ENCODE measurements at regions of chr2 and their contacts with region 1.

Region 1: DNA sequence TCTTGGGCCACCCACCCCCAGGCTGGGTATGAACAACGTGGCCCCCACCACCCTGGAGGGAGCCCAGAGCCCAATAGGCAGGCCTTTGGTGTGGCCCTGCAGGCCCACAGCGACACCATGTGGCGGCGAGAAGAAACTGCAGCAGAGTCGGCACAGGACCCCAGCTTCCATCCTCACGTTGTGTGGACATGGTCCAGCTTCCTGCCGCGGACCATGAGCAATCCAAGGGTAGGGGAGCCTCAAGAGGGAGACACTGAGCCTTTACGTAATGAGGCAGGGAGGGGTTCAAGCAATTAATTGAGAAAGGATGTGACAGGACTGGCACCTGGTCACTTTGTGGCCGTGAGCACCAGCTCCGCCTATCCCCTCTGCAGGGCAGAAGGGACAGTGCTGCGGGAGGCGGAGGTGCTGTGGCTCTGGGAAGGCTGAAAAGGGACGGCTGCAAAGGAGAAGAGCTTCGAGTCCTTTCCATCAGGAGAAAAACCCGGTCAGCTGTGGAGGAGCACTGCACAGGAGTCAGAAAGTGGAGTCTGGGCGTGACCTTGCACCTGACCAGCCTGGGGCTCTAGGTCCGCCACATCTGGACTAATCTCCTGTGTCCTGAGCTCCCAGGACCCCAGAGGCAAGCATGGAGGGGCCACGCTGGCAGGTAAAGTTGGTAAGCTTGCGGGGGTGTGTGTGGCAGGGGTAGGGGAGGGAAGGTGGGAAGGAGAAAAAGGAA is 44.8 kb downstream of the TMEM37 start:
- DNase-seq: peak; percentile 29 to 89
- H3K4me3 ChIP-seq: no peak overlapping the region
- CTCF ChIP-seq: peak in 1 of 3 donors; percentile 79
- POLR2A ChIP-seq: no peak

Region 2: GRCh38 chr2:119011162-119011909 is 465.1 kb before region 1 on chr2:
- intact Hi-C with region 1: loop called (anchors 10 kb)
- DNase-seq: peak in 1 of 2 donors; percentile 74
- H3K4me3 ChIP-seq: no peak overlapping the region
- CTCF ChIP-seq: no peak
- POLR2A ChIP-seq: no peak

Region 3: DNA sequence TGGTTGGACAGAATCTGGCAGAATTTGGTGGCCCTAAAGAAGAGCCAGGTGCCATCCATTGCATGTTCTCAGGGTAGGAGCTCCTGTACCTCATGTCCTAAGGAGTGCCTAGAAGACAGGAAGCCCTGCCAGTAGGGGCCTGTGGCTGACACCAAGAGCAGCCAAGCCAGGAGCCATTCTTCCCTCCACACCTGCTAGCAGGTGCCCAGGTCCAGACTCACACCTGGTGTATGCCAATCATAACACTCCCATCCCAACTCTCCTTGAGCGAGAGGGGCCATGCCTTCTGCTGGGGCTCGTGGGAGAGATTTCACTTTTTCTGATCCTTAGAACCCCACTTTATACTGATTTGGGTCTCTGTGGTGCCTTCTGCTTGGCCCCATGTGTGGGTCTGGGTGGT is 71.3 kb before region 1 on chr2:
- intact Hi-C with region 1: loop called (anchors 2 kb)
- DNase-seq: peak in 1 of 2 donors; percentile 66
- H3K4me3 ChIP-seq: no peak overlapping the region
- CTCF ChIP-seq: no peak
- POLR2A ChIP-seq: no peak

Region 4: DNA sequence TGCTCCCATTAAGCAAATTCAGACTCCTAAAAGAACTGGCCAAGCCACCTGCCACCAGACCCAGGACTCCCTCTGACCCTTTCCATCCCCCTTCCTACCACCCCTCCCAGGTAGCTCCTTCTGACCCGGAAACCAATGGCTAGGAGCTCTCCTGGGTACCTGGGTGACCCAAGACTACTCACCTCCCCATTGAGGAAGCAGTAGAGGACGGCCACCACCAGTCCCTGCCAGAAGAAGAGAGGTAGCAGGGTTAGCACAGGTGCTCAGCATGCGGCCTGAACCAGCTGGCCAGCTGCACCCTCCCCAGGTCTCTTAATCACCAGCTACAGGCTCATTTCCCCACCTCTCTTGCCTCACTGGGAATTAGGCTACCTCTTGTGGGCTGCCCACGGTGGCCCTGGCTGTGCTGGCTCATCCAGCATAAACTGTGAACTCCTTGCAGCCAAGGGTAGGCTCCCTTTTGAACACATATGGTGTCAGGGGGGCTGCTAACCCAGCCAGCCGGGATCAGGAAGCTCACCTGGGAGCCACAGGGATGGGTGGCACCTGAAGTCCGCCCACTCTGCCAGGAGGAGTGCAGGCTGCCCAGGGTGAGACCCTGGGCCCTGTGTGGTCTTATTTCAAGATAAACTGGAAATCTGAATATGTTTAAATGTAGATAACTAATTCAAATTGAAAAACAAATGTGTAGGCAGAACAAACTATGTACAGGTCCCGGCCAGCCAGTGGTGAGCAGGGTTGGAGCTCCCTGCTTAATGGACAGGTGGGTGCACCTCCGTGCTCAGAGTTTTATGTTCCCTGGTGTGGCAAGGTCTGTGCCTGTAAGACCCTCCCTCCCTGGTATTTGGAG is 34.9 kb before region 1 on chr2:
- intact Hi-C with region 1: no loop called
- DNase-seq: no peak
- H3K4me3 ChIP-seq: no peak overlapping the region
- CTCF ChIP-seq: no peak
- POLR2A ChIP-seq: no peak